Activated CD4-positive, alpha-beta memory T cell treated with anti-CD3 and anti-CD28 coated beads for 36 hours (primary cell): ENCODE measurements at regions of chr15 and their contacts with region 1.

Region 1: DNA sequence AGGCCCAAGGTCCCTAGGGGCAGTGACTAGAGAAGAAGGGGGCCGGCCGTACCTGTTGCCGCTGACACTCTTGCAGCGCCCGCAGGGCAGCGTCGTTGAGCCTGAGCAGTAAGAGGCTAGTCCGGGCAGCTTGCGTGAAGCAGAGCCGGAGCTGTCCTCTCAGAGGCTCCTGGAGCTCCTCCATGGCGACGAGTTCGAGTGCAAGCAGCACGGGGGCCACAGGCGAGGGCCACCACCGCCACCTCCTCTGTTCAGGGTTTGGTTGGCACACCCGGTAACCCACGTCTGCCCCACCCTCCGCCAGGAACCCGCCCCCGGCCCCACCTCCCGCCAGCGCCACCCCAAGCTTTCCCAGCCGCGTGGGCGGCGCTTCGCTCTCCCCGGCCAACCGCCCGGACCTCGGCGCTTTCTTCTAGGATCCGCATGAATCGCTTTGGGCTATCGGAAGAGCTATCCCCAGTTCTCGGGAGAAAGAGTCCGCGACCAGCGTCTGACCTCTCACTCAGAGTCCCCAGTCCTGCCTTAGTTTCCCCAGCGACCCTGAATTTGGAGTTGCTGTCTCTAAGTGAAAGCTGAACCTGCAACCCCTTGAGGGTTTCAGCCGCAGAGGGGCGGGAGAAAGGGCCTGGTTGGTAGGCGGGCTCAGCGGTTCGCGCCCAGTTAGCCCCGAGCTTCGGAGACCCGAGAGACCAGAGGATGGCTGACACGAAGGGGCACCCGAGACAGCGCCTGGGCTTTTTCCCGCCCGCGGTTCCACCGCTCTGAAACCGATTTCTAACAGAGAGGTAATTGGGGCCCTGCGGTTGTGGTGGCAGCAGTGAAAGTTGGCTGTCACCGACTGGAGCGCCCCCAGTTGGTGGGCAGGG is at the start of gene ELL3:
- DNase-seq: peak; percentile 93
- H3K4me3 Mint-ChIP-seq: peak within 1 kb of the TSS; percentile 85
- H3K27ac Mint-ChIP-seq: peak within 1 kb of the TSS; percentile 84
- H3K4me1 Mint-ChIP-seq: peaks cover 24% of the 10 kb centered on the region
- H3K27me3 Mint-ChIP-seq: no peaks in the 10 kb centered on the region
- total RNA-seq, gene ELL3: 2.4 to 2.9 TPM

Region 2: DNA sequence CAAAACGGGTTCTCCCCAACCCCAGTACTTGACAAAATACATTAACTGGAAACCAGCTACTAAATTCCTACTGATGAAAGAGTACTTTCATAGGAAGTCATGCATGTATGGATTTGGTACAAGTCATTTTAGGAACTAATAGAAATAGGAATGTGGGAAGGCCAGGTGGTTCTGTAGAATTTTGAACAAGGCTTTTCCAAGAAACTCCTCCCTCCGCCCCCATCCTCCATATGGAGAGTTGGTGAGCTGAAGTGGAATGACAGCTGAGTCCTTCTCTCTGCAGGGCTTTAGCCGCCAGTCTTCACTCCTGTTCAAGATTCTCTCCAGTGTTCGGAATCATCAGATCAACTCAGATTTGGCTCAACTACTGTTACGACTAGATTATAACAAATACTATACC is 372.8 kb before region 1 on chr15:
- CTCF ChIA-PET with region 1: no interaction called
- POLR2A ChIA-PET with region 1: no interaction called
- intact Hi-C with region 1: no loop called
- DNase-seq: no peak
- H3K4me3 Mint-ChIP-seq: no peak overlapping the region
- H3K27ac Mint-ChIP-seq: no peak overlapping the region
- H3K4me1 Mint-ChIP-seq: no peaks in the 10 kb centered on the region
- H3K27me3 Mint-ChIP-seq: no peaks in the 10 kb centered on the region

Region 3: DNA sequence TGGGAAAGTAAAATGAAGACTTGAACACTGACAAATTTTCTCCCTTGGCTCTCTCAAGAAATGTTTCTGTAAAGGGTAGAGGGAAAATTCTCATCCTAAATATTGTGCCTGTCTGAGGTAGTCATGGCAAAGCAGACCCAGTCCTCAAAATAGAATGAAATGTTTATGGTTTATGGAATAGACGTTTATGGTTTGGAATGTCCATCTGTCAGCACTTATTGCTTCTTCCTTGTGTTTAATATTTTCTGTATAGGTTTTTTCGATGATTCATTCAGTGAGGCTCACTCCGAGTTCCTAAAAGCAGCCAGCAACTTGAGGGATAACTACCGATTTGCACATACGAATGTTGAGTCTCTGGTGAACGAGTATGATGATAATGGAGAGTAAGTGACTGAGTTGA is 14.1 kb before region 1 on chr15:
- CTCF ChIA-PET with region 1: no interaction called
- POLR2A ChIA-PET with region 1: interaction called, 10 read pairs
- intact Hi-C with region 1: no loop called
- DNase-seq: no peak
- H3K4me3 Mint-ChIP-seq: no peak overlapping the region
- H3K27ac Mint-ChIP-seq: peak overlapping the region; percentile 3
- H3K4me1 Mint-ChIP-seq: no peaks in the 10 kb centered on the region
- H3K27me3 Mint-ChIP-seq: no peaks in the 10 kb centered on the region

Region 4: DNA sequence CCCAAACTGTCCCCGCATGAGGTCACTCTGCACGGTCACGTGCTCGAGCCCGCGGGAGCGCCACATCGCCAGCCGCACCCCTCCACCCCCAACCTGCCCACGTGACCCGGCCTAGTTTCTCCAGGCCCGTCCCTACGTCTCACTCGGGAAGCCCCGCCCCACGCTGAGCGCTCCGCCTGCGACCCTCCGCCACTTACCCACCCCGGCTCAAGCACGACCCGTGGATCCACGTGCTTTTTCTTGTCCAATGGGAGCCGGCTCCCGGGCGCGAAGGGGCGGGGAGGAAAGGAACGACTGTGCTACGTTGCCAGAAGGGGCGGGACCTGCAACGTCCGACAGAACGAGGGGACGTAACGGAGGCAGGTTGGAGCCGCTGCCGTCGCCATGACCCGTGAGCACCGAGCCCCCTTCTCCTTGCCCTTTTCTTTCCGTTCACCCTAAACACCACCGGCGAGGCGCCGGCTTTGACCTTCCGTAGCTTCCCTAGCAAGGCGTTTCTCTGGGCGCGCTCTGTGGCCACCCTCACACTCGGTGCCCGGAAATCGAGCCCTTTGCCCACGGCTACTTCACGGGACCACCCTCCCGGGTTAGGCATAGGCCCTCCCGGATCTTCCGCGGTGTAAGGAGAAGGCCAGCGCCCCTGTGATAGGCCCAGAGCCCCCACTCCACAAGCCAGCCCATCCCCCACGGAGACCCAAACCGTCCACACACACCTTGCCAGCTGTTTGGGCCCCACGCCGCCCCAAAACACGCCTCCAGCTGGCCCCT is 15.2 kb after region 1 on chr15 and contains the start of gene SERF2:
- CTCF ChIA-PET with region 1: interaction called, 15 read pairs
- POLR2A ChIA-PET with region 1: interaction called, 21 read pairs
- intact Hi-C with region 1: loop called (anchors 1 kb)
- DNase-seq: peak; percentile 100
- H3K4me3 Mint-ChIP-seq: peak within 1 kb of the TSS; percentile 95
- H3K27ac Mint-ChIP-seq: peak within 1 kb of the TSS; percentile 96
- H3K4me1 Mint-ChIP-seq: peaks cover 38% of the 10 kb centered on the region
- H3K27me3 Mint-ChIP-seq: no peaks in the 10 kb centered on the region
- total RNA-seq, gene SERF2: 787 to 817 TPM

Region 5: GRCh38 chr15:43800286-43801141 is 23.6 kb after region 1 on chr15 and contains the start of gene HYPK:
- CTCF ChIA-PET with region 1: interaction called, 10 read pairs
- POLR2A ChIA-PET with region 1: interaction called, 6 read pairs
- intact Hi-C with region 1: no loop called
- DNase-seq: peak; percentile 95
- H3K4me3 Mint-ChIP-seq: peak within 1 kb of the TSS; percentile 99
- H3K27ac Mint-ChIP-seq: peak within 1 kb of the TSS; percentile 87
- H3K4me1 Mint-ChIP-seq: peaks cover 45% of the 10 kb centered on the region
- H3K27me3 Mint-ChIP-seq: no peaks in the 10 kb centered on the region
- total RNA-seq, gene HYPK: 16.7 to 19.1 TPM

Region 6: DNA sequence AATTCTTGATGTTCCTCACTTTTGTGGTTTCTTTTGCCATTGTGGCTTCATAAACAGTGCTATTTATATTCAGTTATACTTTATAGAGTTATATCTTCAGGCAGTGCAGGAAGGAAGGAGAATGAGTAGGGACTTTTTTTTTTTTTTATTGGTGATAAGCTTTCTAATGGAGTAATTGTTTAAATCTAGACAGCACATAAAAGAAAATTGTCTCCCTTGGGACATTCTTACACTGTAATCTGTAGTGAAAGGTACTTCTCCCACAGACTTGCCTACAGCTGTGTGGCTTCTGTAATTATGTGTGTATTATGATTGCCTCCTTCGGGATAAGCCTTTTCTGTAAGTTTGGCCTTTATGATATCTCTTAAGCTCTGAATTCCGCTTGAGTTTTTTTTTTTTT is 91.5 kb after region 1 on chr15:
- CTCF ChIA-PET with region 1: no interaction called
- POLR2A ChIA-PET with region 1: no interaction called
- intact Hi-C with region 1: no loop called
- DNase-seq: no peak
- H3K4me3 Mint-ChIP-seq: no peak overlapping the region
- H3K27ac Mint-ChIP-seq: no peak overlapping the region
- H3K4me1 Mint-ChIP-seq: no peaks in the 10 kb centered on the region
- H3K27me3 Mint-ChIP-seq: no peaks in the 10 kb centered on the region